CD4-positive, alpha-beta T cell (primary cell): ENCODE measurements at regions of chr6 and their contacts with region 1.

Region 1: GRCh38 chr6:52826513-52826912 is 14.1 kb downstream of the GSTA5 start:
- DNase-seq: no peak
- ATAC-seq: no peak
- H3K4me3 ChIP-seq: no peak overlapping the region
- H3K4me3 Mint-ChIP-seq: no peak overlapping the region
- H3K27ac ChIP-seq: no peak overlapping the region
- H3K27ac Mint-ChIP-seq: no peak overlapping the region
- H3K4me1 ChIP-seq: no peaks in the 10 kb centered on the region
- H3K4me1 Mint-ChIP-seq: no peaks in the 10 kb centered on the region
- H3K27me3 ChIP-seq: peaks cover 0 to under 1% of the 10 kb centered on the region in 2 experiments
- H3K27me3 Mint-ChIP-seq: peaks cover 11% of the 10 kb centered on the region
- CTCF ChIP-seq: no peak

Region 2: DNA sequence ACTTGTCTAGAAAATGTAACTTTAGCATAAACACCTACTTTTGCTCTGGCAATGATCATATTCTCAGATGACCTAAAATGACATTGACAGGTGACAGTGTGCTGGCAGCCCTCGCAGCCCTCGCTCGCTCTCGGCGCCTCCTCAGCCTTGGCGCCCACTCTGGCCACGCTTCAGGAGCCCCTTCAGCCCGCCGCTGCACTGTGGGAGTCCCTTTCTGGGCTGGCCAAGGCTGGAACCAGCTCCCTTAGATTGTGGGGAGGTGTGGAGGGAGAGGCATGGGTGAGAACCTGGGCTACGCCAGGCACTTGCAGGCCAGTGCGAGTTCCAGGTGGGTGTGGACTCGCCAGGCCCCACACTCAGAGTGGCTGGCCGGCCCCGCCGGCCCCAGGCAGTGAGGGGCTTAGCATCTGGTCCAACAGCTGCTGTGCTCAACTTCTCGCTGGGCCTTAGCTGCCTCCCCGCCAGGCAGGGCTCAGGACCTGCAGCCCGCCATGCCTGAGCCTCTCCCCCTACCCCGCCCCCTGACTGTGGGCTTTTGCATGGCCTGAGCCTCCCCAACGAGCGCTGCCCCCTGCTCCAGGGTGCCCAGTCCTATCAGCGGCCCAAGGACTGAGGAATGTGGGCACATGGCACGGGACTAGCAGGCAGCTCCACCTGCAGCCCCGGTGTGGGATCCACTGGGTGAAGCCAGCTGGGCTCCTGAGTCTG is 40.1 kb before region 1 on chr6:
- CTCF ChIA-PET with region 1: no interaction called
- POLR2A ChIA-PET with region 1: no interaction called
- intact Hi-C with region 1: loop called in 1 of 2 experiments (anchors 1 kb)
- DNase-seq: no peak
- ATAC-seq: no peak
- H3K4me3 ChIP-seq: no peak overlapping the region
- H3K4me3 Mint-ChIP-seq: no peak overlapping the region
- H3K27ac ChIP-seq: no peak overlapping the region
- H3K27ac Mint-ChIP-seq: no peak overlapping the region
- H3K4me1 ChIP-seq: no peaks in the 10 kb centered on the region
- H3K4me1 Mint-ChIP-seq: no peaks in the 10 kb centered on the region
- H3K27me3 ChIP-seq: no peaks in the 10 kb centered on the region
- H3K27me3 Mint-ChIP-seq: peaks cover 14% of the 10 kb centered on the region
- CTCF ChIP-seq: no peak

Region 3: DNA sequence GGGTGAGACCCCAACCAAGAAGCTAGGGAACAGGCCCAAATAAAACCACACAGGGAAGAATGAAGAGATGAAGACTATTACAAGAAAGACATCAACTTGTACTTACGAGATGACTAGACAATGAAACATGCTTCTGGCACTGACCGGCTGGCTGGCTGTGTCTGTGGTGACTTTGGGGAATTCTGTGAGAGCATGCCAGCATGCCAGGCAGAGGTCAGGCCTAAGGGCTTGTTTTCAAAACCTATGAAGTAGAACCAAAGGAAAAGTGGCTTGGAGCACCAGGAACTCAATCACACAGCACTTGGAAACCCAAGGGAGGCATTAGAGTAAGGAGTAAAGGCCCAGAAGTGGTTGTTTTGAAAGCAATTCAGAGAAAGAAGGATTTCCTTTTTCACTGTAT is 111.4 kb after region 1 on chr6:
- CTCF ChIA-PET with region 1: no interaction called
- POLR2A ChIA-PET with region 1: no interaction called
- intact Hi-C with region 1: no loop called
- DNase-seq: no peak
- ATAC-seq: no peak
- H3K4me3 ChIP-seq: no peak overlapping the region
- H3K4me3 Mint-ChIP-seq: no peak overlapping the region
- H3K27ac ChIP-seq: no peak overlapping the region
- H3K27ac Mint-ChIP-seq: no peak overlapping the region
- H3K4me1 ChIP-seq: no peaks in the 10 kb centered on the region
- H3K4me1 Mint-ChIP-seq: no peaks in the 10 kb centered on the region
- H3K27me3 ChIP-seq: peaks cover 0 to 2% of the 10 kb centered on the region in 2 experiments
- H3K27me3 Mint-ChIP-seq: peaks cover 11% of the 10 kb centered on the region
- CTCF ChIP-seq: no peak